ENCODE measurements at regions of chr13 and their contacts with region 1.

Region 1: GRCh38 chr13:23020223-23020843 is 160.4 kb upstream of the SGCG start:
- DNase-seq: peak in 4 of 5 donors; percentile 19 to 51 (median 32)
- H3K4me3 ChIP-seq: no peak overlapping the region
- H3K27ac ChIP-seq: no peak overlapping the region
- H3K4me1 ChIP-seq: no peaks in the 10 kb centered on the region
- H3K27me3 ChIP-seq: no peaks in the 10 kb centered on the region
- CTCF ChIP-seq: peak; percentile 46 to 70 (median 64)
- EP300 ChIP-seq: no peak
- POLR2A ChIP-seq: no peak

Region 2: GRCh38 chr13:22320991-22321390 is 699.3 kb before region 1 on chr13:
- intact Hi-C with region 1: no loop called
- DNase-seq: no peak
- H3K4me3 ChIP-seq: no peak overlapping the region
- H3K27ac ChIP-seq: no peak overlapping the region
- H3K4me1 ChIP-seq: no peaks in the 10 kb centered on the region
- H3K27me3 ChIP-seq: no peaks in the 10 kb centered on the region
- CTCF ChIP-seq: no peak
- EP300 ChIP-seq: no peak
- POLR2A ChIP-seq: no peak

Region 3: GRCh38 chr13:22801402-22802003 is 218.8 kb before region 1 on chr13:
- intact Hi-C with region 1: loop called in 2 of 4 experiments (anchors 10 kb)
- DNase-seq: no peak
- H3K4me3 ChIP-seq: no peak overlapping the region
- H3K27ac ChIP-seq: no peak overlapping the region
- H3K4me1 ChIP-seq: no peaks in the 10 kb centered on the region
- H3K27me3 ChIP-seq: no peaks in the 10 kb centered on the region
- CTCF ChIP-seq: peak in 2 of 3 donors; percentile 26 to 28
- EP300 ChIP-seq: no peak
- POLR2A ChIP-seq: no peak